GM13976 (cell line): ENCODE measurements at regions of chr13 and their contacts with region 1.

Region 1: DNA sequence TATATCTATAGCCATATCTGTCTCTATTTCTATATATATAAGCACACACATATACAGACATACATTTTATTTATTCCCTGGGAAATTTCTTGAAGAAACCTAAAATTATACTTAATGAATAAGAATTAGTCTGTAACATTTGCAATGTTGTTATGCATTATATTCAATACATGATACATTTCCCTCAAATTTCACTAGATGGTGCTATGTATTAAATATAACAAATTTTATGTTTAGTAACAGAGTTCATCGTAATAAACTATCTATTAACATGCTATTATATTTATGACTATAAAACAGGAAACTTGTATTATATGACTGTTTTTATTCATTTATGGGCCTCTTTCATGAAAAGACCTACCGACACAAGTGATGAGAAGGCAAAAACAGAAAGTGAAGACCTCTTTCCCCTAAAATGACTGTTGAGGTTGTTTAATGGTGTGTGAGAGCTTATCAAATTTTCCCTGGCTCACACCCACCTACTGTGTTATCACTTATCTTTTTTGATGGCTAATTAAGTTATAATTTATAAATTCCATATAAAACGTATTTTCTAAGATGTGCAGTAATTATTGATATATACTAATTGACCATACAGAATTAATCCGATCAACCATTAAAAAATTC is 881.9 kb downstream of the SLITRK6 start:
- DNase-seq: peak; percentile 24
- CTCF ChIP-seq: no peak

Region 2: GRCh38 chr13:84616864-84617263 is 300.5 kb before region 1 on chr13:
- in situ Hi-C with region 1: no loop called
- DNase-seq: no peak
- CTCF ChIP-seq: no peak

Region 3: DNA sequence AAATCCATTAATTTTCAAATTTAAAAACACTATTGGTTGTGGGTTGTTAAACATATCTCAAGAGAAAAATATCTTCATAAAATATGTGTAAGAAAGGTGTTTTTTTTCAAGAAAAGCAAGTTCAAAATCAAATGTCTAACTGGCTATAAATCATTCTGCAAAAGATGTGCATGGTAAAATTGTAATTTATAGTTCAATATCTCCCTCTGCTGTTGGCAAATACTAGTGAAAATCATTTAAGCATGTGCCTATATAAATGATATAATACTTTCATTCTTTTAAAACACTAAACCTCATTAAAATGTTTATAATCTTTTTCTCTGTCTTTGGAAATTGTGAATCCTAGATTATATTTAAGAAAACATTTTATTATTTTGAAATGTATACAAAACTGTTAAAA is 899.0 kb after region 1 on chr13:
- in situ Hi-C with region 1: loop called (anchors 10 kb)
- DNase-seq: no peak
- CTCF ChIP-seq: no peak